PC-9 (cell line): ENCODE measurements at regions of chr10 and their contacts with region 1.

Region 1: GRCh38 chr10:79445141-79445976 is at the start of gene ZCCHC24:
- DNase-seq: peak; percentile 92 to 99
- H3K4me3 ChIP-seq: peak within 1 kb of the TSS; percentile 81
- H3K27ac ChIP-seq: no peak within 1 kb of the TSS
- H3K4me1 ChIP-seq: peaks cover 47% of the 10 kb centered on the region
- H3K27me3 ChIP-seq: no peaks in the 10 kb centered on the region
- CTCF ChIP-seq: no peak
- total RNA-seq, gene ZCCHC24: 6.0 and 6.3 TPM in 2 replicates

Region 2: GRCh38 chr10:78185693-78186055 is 1259.7 kb before region 1 on chr10:
- CTCF ChIA-PET with region 1: no interaction called
- POLR2A ChIA-PET with region 1: no interaction called
- intact Hi-C with region 1: no loop called
- DNase-seq: no peak
- H3K4me3 ChIP-seq: no peak overlapping the region
- H3K27ac ChIP-seq: no peak overlapping the region
- H3K4me1 ChIP-seq: no peaks in the 10 kb centered on the region
- H3K27me3 ChIP-seq: peaks cover 20% of the 10 kb centered on the region; the same call in 1 of the 2 replicates
- CTCF ChIP-seq: no peak

Region 3: GRCh38 chr10:79149662-79150443 is 295.5 kb before region 1 on chr10:
- CTCF ChIA-PET with region 1: no interaction called
- POLR2A ChIA-PET with region 1: no interaction called
- intact Hi-C with region 1: loop called (anchors 10 kb)
- DNase-seq: peak; percentile 92 to 99
- H3K4me3 ChIP-seq: peak overlapping the region; percentile 29; the same call in 1 of the 2 replicates
- H3K27ac ChIP-seq: peak overlapping the region; percentile 90
- H3K4me1 ChIP-seq: peaks cover 62% of the 10 kb centered on the region
- H3K27me3 ChIP-seq: no peaks in the 10 kb centered on the region
- CTCF ChIP-seq: no peak

Region 4: DNA sequence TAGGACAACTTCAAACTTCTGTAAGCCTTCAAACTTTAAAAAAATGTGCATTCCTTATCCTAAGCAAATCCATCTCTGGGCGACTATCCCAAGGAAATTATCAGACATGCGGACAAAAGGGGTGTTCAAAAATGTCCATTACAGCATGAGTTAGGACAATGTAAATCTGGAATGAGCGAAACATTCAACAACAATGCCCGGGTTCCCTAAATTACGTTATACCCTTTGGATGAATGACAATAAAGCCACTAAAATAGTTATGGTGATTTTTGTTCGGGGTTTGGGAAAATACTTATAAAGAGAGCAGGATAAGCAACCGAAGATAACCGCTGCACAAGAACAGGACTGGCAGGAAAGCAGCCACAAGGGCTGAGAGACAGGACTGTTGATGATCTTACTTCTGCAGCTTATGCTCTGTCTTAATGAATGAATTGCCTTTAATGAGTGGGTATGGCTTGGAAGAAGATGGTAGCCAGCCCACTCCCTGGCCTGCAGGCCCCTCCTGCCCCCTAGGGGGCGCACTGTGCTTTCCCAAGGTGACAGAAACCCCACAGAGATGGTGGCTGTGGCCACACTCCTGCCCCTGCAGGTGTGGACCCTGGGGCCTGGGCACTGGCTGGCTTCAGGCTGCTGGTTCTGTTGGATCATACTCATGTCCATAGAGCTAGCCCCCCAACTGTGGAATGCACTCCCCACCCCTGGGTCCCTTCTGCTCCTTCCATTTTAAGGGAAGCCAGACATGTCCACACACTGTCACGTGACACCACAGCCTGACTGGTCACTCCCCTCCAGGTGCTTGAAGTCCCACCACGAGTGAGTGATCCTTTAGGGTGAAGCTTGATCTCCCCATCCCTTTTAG is 45.0 kb before region 1 on chr10:
- CTCF ChIA-PET with region 1: interaction called, 3 read pairs
- POLR2A ChIA-PET with region 1: no interaction called
- intact Hi-C with region 1: loop called (anchors 5 kb)
- DNase-seq: peak in 1 of 2 experiments; percentile 57
- H3K4me3 ChIP-seq: no peak overlapping the region
- H3K27ac ChIP-seq: no peak overlapping the region
- H3K4me1 ChIP-seq: peaks cover 22% of the 10 kb centered on the region
- H3K27me3 ChIP-seq: no peaks in the 10 kb centered on the region
- CTCF ChIP-seq: peak; percentile 91

Region 5: DNA sequence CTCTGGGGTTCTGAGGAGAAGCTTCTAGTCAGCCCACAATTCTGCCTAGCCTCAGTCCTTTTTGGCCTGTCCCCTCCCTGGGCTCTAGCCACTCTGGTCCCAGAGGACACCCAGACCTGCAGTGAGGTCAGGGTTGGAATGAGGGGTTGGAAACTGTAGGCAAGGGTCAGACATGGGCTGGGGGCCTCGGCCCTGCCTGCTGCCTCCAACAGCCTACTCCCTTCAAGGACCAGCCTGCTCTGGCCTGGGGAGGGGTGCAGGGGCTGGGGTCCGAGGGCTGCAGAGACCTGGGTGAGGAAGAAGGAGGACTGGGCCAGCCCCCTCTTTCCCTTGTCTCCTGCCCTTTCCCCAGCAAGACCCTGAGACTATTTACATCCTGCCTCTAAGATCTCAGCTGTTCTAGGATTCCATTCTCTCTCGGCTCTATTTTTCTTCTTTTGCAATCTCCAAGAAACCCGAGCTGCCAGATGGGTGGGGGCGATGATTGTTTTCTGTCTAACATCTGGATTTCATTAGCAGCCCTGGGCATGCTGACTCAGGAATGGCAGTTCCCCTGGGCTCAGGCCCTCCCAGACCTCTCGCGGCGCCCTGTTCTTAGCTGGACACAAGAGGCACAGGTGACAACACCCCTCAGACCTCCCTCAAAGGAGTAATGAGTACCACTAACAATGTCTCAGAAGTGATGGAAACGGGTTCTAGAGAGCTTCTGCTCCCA is 23.0 kb before region 1 on chr10:
- CTCF ChIA-PET with region 1: no interaction called
- POLR2A ChIA-PET with region 1: interaction called, 12 read pairs
- intact Hi-C with region 1: no loop called
- DNase-seq: no peak
- H3K4me3 ChIP-seq: no peak overlapping the region
- H3K27ac ChIP-seq: no peak overlapping the region
- H3K4me1 ChIP-seq: no peaks in the 10 kb centered on the region
- H3K27me3 ChIP-seq: no peaks in the 10 kb centered on the region
- CTCF ChIP-seq: no peak

Region 6: GRCh38 chr10:79463578-79464496 is 18.5 kb after region 1 on chr10:
- CTCF ChIA-PET with region 1: no interaction called
- POLR2A ChIA-PET with region 1: interaction called, 11 read pairs
- intact Hi-C with region 1: no loop called
- DNase-seq: no peak
- H3K4me3 ChIP-seq: no peak overlapping the region
- H3K27ac ChIP-seq: no peak overlapping the region
- H3K4me1 ChIP-seq: no peaks in the 10 kb centered on the region
- H3K27me3 ChIP-seq: 0 out of 2 replicates have a peak, but pooled peaks cover 9% of the 10 kb centered on the region
- CTCF ChIP-seq: no peak

Region 7: DNA sequence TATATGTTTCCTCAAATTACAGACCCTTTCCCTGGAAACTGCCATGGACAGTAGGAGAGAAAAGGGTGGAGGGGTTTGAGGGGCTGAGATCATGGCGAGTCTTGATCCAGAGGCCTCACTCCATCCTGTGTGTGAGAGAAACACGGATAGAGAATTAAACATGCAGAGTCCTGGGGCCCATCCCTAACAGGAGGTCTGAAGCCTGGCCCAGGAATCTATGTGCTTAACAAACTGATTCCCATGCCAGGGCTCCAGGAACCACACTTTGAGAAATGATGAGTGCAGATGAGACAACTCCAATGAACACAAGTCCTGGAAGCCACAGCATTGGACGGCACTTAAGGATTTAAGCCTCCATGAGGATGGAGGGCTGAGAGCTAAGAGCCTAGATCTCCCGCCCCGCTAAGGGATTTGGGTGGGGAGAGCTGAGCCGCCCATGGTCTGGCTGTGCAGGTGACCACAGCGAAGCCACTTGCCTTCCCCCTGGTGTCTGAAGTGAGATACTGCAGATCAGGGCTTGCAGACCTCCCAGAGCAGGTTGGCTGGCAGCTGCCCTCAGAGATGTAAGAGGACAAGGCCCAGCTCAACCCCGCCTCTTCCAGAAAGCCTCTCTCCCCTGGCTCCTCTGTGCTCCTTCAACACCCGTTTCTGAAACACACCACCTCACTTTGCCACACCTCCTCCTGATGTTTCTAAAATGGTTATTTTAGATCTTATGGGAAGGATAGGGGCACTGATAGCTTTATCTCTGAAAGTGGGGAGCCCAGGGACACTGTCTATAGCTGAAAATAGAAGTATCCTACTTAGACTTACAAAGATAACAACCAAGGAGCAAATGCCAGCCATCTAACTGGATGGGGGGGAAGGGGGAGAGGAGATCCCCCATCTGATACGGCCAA is 42.2 kb after region 1 on chr10:
- CTCF ChIA-PET with region 1: no interaction called
- POLR2A ChIA-PET with region 1: no interaction called
- intact Hi-C with region 1: loop called (anchors 2 kb)
- DNase-seq: peak in 1 of 2 experiments; percentile 57
- H3K4me3 ChIP-seq: no peak overlapping the region
- H3K27ac ChIP-seq: peak overlapping the region; percentile 11; the same call in 1 of the 2 replicates
- H3K4me1 ChIP-seq: peaks cover 15% of the 10 kb centered on the region
- H3K27me3 ChIP-seq: no peaks in the 10 kb centered on the region
- CTCF ChIP-seq: peak; percentile 70